ENCODE measurements at regions of chr1 and their contacts with region 1.

Region 1: GRCh38 chr1:244272471-244273261 is 179.0 kb downstream of the ADSS2 start:
- DNase-seq: peak in 4 of 5 donors; percentile 83 to 92 (median 88)
- H3K4me3 ChIP-seq: no peak overlapping the region
- H3K27ac ChIP-seq: no peak overlapping the region
- H3K4me1 ChIP-seq: peaks cover 0 to 4% (median 0%) of the 10 kb centered on the region in 3 donors
- H3K27me3 ChIP-seq: no peaks in the 10 kb centered on the region
- CTCF ChIP-seq: peak; percentile 100

Region 2: GRCh38 chr1:243354511-243355153 is 918.0 kb before region 1 on chr1:
- intact Hi-C with region 1: loop called (anchors 10 kb)
- DNase-seq: no peak
- H3K4me3 ChIP-seq: peak overlapping the region in 2 of 3 donors; percentile 47 to 55
- H3K27ac ChIP-seq: no peak overlapping the region
- H3K4me1 ChIP-seq: no peaks in the 10 kb centered on the region
- H3K27me3 ChIP-seq: no peaks in the 10 kb centered on the region
- CTCF ChIP-seq: no peak